Cardiac septum (tissue), 1 donor: ENCODE measurements at regions of chr10 and their contacts with region 1.

Region 1: GRCh38 chr10:7410862-7411670 is at the start of gene SFMBT2:
- DNase-seq: peak; percentile 81
- total RNA-seq, gene SFMBT2: 14.2 TPM

Region 2: DNA sequence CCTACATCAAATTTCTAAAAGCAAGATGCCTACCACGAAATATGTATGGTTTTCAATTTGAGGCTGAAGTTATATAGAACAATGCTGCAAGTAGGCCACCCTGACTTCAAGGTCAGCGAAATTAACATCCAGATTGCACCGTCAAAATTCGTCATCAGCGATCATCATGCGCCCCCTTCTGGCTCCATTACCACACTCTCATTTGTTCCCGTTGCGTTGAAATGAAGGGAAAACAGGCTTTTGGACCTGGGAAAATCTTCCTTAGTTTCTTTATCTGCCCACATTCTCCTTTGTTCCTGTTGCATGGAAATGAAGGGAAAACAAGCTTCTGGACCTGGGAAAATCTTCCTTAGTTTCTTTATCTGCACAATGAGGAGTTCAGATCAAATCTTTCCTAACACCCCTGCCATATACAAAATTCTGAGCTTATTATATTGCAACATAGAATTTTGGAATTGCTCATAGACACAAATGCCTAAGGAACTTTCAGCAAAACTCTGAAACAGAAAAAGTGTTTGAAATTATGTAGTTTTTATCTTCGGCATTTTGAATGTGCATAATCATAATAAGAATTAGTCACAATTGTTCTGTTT is 732.8 kb before region 1 on chr10:
- intact Hi-C with region 1: loop called (anchors 10 kb)
- DNase-seq: no peak

Region 3: DNA sequence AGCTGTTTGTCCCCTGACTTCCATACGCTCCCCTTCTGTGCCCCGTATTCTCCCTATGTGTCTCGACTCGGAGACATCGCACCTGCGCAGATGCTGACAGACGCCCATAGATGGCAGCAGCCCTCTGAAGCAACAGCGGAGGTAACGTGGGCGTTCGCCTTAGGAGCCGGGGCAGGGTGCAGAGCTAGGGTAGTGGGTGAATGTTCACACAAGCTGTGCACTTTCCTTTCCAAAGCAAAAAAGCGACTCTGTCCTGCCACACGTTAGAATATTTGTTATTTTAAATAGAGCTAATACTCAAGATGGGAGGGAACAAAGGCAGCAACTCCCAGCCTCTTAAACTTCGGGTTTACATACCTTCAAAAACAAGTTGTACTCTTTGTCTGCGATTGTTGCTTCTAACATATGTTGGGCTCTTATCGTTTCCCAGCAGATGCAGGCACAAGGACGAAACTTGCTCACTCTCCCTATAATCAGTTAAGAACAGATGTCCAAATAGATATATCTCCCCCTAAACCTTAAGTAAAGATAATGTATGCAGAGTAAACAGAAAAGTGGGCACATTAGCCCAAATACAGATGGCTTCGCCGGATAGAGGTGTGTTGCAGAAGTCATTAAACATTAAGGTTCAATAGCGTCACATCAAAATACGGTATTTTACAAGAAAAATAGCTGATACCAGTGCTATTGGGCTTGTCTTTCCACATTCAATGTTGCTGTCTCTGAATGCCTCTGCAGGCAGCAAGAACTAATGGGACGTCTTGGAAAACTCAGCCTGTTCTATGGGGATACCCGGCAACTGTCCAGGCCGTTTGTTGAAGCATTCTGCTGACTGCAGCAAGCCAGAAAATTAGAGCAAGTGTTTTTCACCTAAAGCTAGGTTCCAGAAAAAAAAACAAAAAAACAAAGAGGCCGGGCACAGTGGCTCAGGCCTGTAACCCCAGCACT is 490.7 kb before region 1 on chr10:
- intact Hi-C with region 1: loop called (anchors 5 kb)
- DNase-seq: peak; percentile 87

Region 4: GRCh38 chr10:7121154-7121810 is 289.8 kb before region 1 on chr10:
- intact Hi-C with region 1: loop called (anchors 5 kb)
- DNase-seq: peak; percentile 79

Region 5: DNA sequence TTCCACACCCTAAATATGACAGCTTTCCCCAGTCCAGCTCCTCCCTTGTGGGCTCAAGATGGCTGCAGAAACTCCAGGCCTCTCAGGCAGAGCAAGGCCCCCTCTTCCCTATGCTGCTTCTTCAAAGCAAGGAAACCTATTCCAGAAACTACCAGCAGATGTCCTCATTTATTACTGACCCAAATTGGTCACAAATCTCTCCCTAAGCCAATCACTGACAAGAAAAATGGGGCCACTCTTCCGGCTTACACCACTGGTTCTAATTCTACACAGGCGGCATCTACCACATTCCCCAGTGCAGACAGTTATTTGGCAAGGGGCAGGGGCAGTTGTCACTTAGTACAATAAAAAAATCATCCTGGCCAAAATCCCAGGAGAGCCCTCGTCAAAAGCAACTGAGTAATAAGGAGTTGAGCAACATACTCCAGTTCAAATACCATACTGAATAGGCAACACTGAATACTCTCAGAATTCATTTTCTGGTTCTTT is 150.6 kb before region 1 on chr10:
- intact Hi-C with region 1: loop called (anchors 1 kb)
- DNase-seq: no peak

Region 6: DNA sequence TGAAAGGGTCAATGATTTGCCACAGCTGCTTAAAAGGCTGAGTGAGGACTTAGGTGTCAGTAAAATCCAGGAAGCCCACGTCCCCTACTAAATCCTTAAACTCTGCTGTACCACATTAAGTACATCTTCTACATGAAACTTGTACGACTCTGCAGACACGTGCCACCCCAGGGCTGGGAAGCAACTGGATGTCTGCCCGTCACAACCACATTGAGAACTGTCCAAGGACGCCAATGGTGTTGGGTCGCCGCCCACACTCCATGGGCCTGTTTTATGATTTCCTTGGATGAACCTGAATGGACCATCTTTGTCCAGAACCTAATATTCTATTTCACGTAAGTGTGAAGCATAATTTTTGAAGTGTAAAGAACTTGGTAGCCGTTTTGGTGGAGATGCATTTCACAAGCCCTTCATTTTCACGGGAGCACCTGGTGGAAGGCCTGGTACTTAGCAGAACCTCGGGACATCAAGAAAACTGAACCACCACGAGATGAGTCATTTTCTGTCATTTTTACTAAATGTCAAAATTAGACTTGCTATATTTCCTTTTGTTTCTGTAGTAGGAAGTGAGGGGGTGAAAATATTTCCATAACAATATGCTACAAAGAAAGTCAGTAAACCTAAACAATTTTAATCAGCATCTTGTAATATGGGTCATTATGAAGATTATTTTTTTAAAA is 135.2 kb before region 1 on chr10:
- intact Hi-C with region 1: loop called (anchors 5 kb)
- DNase-seq: no peak

Region 7: GRCh38 chr10:7340179-7340874 is 70.7 kb before region 1 on chr10:
- intact Hi-C with region 1: loop called (anchors 2 kb)
- DNase-seq: no peak

Region 8: DNA sequence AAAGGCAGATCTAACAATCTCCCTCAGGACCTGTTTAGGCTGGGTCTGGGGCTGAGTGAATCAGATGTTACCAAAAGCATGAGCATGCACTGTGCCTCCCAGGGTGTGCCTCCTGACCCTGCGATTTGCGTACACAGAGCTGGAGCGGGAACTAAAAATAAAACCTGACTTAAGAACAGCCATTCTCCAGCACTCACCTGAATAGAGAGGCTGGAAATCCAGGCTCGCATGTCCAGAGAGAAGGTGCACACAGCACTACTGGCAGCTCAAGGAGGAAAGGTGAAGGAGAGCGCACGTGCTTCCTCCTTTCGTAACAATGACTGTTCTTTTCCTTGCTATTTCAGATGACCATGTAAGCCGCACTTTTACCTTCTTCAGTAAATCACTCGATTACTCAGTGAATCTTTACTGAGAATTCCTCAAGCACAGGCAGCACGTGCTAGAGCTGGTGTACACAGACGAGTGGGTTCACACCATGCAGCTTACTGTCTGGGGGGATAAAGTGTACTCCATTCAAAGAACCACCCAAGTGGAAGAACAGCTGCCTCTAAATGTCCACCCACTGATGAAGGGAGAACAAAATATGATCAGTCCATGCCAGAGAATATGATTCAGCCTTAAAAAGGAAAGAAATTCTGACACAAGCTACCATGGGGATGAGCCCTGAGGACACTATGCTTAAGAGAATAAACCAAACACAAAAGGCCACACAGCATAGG is 45.9 kb before region 1 on chr10:
- intact Hi-C with region 1: no loop called
- DNase-seq: no peak

Region 9: DNA sequence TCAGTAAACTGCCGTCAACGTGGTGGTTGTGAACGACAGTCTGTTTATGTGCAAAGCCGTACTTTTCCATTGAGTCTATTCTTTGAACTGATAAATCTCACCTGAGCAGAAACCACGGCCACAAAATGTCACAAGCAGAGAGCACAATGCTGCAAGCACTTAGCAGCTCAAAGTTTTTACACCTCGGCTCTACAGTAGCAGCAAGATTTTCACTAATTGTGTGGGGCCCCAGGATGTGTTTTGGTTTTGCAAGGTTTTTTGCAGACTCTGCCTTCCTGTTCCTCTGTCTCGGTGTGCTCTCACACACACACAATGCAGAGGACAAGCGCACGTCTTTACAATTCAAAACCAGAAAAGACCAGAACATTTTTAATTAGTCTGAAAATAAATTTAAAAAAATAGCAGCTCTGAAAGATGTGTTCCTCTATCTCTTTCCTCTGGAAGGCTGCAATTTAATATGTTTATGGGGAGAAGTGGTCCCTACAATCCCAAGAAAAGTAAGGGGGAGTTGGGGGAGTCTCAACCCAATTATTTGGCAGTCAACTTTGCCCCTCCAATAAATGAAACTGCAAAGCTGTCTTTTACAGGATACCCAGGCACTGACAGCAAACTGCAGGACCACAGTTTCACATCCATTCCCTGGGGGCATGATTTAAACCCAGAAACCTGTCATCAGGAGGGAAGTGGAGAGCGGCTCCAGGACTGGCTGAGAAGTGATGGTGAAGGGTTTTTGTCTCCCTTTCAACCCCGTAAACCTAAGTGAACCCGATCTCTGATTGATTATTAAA is 73.6 kb after region 1 on chr10:
- intact Hi-C with region 1: no loop called
- DNase-seq: no peak